ENCODE measurements at regions of chr12 and their contacts with region 1.

Region 1: GRCh38 chr12:751192-751998 is 984 bp upstream of the WNK1 start:
- DNase-seq: peak; percentile 78
- ATAC-seq: peak; percentile 47
- H3K4me3 Mint-ChIP-seq: no peak overlapping the region
- H3K27ac Mint-ChIP-seq: no peak overlapping the region
- H3K4me1 Mint-ChIP-seq: peaks cover 24% of the 10 kb centered on the region
- H3K27me3 Mint-ChIP-seq: no peaks in the 10 kb centered on the region
- CTCF ChIP-seq: no peak

Region 2: DNA sequence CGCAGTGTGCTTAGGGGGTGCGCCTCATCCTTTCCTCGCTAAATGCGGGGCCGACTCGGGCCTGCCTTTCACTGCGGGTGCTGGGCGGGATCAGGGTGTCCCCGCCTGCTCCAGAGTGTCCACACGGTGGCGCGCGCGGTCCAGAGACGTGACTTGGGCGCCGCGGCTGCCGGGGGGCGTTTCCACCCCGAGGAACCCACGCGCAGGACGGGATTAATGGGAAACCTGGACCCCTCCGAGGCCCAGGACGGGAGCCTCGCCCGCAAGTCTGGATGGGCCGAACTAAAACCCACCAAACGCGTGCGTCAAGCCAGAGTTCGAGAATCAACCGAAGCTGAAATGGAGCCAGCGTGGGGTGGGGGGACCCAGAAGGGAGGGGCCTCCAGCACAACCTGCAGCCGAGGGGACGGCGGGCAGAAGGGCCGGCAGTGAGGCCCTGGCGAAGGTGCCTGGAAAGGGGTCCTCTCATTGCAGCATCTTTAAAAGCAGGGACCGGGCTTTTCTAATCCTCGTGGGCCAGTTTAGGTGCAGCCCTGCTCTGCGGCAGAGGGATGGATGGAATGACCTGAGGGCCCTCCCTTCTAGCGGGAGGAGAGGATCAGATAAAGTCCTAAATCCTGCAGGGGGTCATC is 181.5 kb before region 1 on chr12:
- CTCF ChIA-PET with region 1: interaction called, 42 read pairs
- POLR2A ChIA-PET with region 1: interaction called, 39 read pairs
- intact Hi-C with region 1: loop called (anchors 2 kb)
- DNase-seq: peak; percentile 84
- ATAC-seq: peak; percentile 98
- H3K4me3 Mint-ChIP-seq: peak overlapping the region; percentile 81
- H3K27ac Mint-ChIP-seq: no peak overlapping the region
- H3K4me1 Mint-ChIP-seq: peaks cover 4% of the 10 kb centered on the region
- H3K27me3 Mint-ChIP-seq: no peaks in the 10 kb centered on the region
- CTCF ChIP-seq: no peak

Region 3: GRCh38 chr12:630656-631632 is 120.5 kb before region 1 on chr12:
- CTCF ChIA-PET with region 1: interaction called, 5 read pairs
- POLR2A ChIA-PET with region 1: interaction called, 29 read pairs
- intact Hi-C with region 1: loop called (anchors 1 kb)
- DNase-seq: peak; percentile 27
- ATAC-seq: peak; percentile 86
- H3K4me3 Mint-ChIP-seq: peak overlapping the region; percentile 80
- H3K27ac Mint-ChIP-seq: peak overlapping the region; percentile 83
- H3K4me1 Mint-ChIP-seq: peaks cover 47% of the 10 kb centered on the region
- H3K27me3 Mint-ChIP-seq: no peaks in the 10 kb centered on the region
- CTCF ChIP-seq: no peak

Region 4: GRCh38 chr12:666766-667308 is 84.6 kb before region 1 on chr12:
- CTCF ChIA-PET with region 1: interaction called, 30 read pairs
- POLR2A ChIA-PET with region 1: interaction called, 73 read pairs
- intact Hi-C with region 1: loop called (anchors 1 kb)
- DNase-seq: no peak
- ATAC-seq: no peak
- H3K4me3 Mint-ChIP-seq: peak overlapping the region; percentile 57
- H3K27ac Mint-ChIP-seq: peak overlapping the region; percentile 80
- H3K4me1 Mint-ChIP-seq: peaks cover 58% of the 10 kb centered on the region
- H3K27me3 Mint-ChIP-seq: no peaks in the 10 kb centered on the region
- CTCF ChIP-seq: no peak

Region 5: DNA sequence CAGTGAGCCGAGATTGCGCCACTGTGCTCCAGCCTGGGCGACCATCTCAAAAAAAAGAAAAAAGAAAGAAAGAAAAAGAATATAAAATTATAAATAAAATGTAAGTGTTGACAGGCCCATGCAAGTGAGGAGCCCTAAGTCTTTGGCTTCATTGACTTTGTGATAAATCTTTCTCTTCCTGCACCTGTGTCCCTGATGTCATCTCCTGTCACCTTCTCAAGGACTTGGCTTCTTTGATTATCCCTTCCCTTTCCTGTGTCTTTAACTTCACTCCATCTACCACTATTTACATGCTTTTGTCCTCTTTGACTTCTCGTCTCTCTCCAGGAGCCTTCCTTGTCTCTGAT is 32.7 kb before region 1 on chr12:
- CTCF ChIA-PET with region 1: interaction called, 6 read pairs
- POLR2A ChIA-PET with region 1: interaction called, 17 read pairs
- intact Hi-C with region 1: loop called (anchors 1 kb)
- DNase-seq: no peak
- ATAC-seq: no peak
- H3K4me3 Mint-ChIP-seq: peak overlapping the region; percentile 44
- H3K27ac Mint-ChIP-seq: peak overlapping the region; percentile 94
- H3K4me1 Mint-ChIP-seq: peaks cover 43% of the 10 kb centered on the region
- H3K27me3 Mint-ChIP-seq: no peaks in the 10 kb centered on the region
- CTCF ChIP-seq: no peak

Region 6: GRCh38 chr12:810671-811415 is 59.4 kb after region 1 on chr12:
- CTCF ChIA-PET with region 1: interaction called, 33 read pairs
- POLR2A ChIA-PET with region 1: interaction called, 5 read pairs
- intact Hi-C with region 1: loop called (anchors 1 kb)
- DNase-seq: no peak
- ATAC-seq: peak; percentile 49
- H3K4me3 Mint-ChIP-seq: no peak overlapping the region
- H3K27ac Mint-ChIP-seq: peak overlapping the region; percentile 41
- H3K4me1 Mint-ChIP-seq: peaks cover 59% of the 10 kb centered on the region
- H3K27me3 Mint-ChIP-seq: no peaks in the 10 kb centered on the region
- CTCF ChIP-seq: no peak

Region 7: GRCh38 chr12:1594261-1595025 is 843.0 kb after region 1 on chr12 and contains the start of gene FBXL14:
- CTCF ChIA-PET with region 1: no interaction called
- POLR2A ChIA-PET with region 1: no interaction called
- intact Hi-C with region 1: loop called (anchors 2 kb)
- DNase-seq: peak; percentile 91
- ATAC-seq: peak; percentile 65
- H3K4me3 Mint-ChIP-seq: peak within 1 kb of the TSS; percentile 92
- H3K27ac Mint-ChIP-seq: peak within 1 kb of the TSS; percentile 92
- H3K4me1 Mint-ChIP-seq: peaks cover 52% of the 10 kb centered on the region
- H3K27me3 Mint-ChIP-seq: no peaks in the 10 kb centered on the region
- CTCF ChIP-seq: no peak
- total RNA-seq, gene FBXL14: 19.4 and 21.6 TPM in 2 replicates